Vagina (tissue), 2 donors: ENCODE measurements at regions of chr7 and their contacts with region 1.

Region 1: DNA sequence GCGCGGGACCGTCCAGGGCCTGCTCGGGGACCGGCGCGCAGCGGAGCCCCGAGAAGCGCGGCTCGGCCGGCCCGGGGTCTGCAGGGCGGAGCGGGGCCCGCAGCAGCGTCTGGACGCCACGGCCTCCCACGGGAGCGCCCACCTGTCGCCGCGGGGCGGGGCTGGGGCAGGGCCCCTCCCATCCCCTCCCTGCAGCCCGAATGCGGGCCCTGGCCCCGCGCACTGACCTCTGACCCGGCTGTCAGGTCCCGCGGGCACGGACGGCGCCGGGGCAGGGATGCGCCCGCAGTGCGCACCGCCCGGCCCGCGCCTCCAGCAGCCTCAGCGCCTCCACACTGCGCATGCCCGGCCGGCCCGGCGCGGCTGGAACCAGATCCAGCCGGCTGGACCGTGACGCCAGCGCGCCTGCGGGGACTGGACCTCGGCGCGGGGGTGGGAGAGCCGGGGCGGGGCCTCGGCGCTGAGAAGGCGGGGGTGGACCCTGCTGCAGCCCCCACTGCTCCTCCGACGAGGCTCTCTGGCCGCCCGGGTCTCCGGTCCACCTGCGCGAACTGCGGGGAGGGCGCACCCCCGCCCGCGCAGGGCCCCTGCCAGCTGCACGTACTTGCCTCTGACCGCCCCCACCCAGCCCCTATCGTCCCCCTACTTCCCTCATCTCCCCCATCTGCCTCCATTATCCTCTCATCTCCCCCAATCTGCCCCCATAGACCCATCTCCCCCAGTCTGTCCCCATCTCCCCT is 16.1 kb upstream of the GPR146 start:
- DNase-seq: no peak
- H3K4me3 ChIP-seq: peak overlapping the region; percentile 62 to 82
- H3K27ac ChIP-seq: peak overlapping the region; percentile 97
- H3K4me1 ChIP-seq: peaks cover 43% of the 10 kb centered on the region
- H3K27me3 ChIP-seq: no peaks in the 10 kb centered on the region
- CTCF ChIP-seq: no peak
- POLR2A ChIP-seq: peak; percentile 20 to 64

Region 2: GRCh38 chr7:1065263-1066260 is 37.4 kb after region 1 on chr7:
- intact Hi-C with region 1: loop called (anchors 2 kb)
- DNase-seq: no peak
- H3K4me3 ChIP-seq: peak overlapping the region in 1 of 2 donors; percentile 28
- H3K27ac ChIP-seq: no peak overlapping the region
- H3K4me1 ChIP-seq: peaks cover 48% of the 10 kb centered on the region
- H3K27me3 ChIP-seq: no peaks in the 10 kb centered on the region
- CTCF ChIP-seq: peak; percentile 91 to 99 (median 97)
- POLR2A ChIP-seq: no peak

Region 3: DNA sequence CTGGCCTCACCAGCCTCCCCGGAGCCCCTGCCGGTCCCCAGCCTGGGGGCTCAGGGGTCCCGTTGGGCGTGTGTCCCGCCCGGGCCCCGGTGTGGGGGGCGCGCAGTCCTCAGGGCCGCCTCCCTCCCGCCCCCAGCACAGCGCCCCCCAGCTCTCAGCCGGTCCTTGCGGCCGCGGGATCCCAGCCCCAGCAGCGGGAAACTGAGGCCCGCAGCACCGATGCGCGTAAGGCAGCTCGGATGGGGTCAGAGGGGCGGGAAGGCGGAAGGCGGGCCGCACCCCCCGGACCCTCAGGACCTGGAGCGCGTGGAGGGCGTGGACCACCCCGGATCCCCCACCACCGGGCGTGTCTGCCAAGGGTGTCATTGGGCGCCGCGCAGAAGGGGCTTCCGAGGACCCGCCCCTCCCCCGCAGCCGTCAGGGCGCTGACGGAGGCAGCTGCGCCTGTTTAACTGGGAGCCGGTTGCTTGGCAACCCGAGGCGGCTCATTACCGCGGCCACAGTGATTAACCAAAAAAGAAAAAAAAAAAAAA is 219.4 kb after region 1 on chr7:
- intact Hi-C with region 1: no loop called
- DNase-seq: no peak
- H3K4me3 ChIP-seq: peak overlapping the region in 1 of 2 donors; percentile 1
- H3K27ac ChIP-seq: no peak overlapping the region
- H3K4me1 ChIP-seq: peaks cover 24% of the 10 kb centered on the region
- H3K27me3 ChIP-seq: peaks cover 40% of the 10 kb centered on the region
- CTCF ChIP-seq: no peak
- POLR2A ChIP-seq: no peak

Region 4: GRCh38 chr7:2709553-2710285 is 1681.5 kb after region 1 on chr7:
- intact Hi-C with region 1: loop called (anchors 10 kb)
- DNase-seq: no peak
- H3K4me3 ChIP-seq: no peak overlapping the region
- H3K27ac ChIP-seq: no peak overlapping the region
- H3K4me1 ChIP-seq: no peaks in the 10 kb centered on the region
- H3K27me3 ChIP-seq: no peaks in the 10 kb centered on the region
- CTCF ChIP-seq: peak; percentile 74 to 77 (median 75)
- POLR2A ChIP-seq: no peak